CD8-positive, alpha-beta T cell (primary cell): ENCODE measurements at regions of chr21 and their contacts with region 1.

Region 1: DNA sequence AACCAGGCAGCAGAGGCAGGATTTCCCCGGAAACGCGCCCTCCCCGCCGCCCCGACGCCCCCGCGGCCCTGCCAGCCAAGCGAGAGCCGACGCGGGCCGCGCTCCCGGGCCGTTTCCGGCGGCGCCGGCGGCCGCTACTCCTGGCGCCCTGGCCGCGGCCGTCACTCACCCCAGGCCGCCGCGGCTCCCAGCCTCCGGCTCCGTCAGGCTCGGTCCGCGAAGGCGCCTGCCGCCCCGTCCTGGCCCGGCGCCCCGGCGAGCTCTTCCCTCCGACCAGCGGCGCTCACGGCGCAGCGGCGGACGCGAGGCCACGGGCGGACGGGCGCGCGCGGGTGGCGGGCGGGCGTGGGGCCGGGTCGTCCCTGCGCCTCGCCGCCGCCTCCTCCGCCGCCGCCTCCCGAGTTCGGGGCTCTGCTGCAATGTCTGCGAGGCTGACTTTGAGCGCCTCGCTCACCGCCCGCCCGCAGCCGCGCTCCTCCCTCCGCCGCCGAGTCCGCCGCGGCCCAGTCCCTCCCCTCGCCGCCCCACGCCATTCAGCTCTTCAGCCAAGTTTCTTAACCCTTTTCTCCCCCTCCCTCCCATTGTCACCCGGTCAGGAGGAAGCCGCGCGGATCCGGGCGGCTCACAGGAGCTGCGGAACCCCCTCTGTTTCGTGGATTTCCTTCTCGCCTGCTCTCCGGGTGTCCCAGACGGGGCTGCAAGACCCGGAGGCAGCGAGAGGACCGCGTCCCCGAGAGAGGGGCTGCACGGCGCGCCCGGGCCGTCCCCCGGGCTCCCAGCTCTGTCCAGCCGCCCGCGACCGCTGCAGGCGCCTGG is at the start of gene NRIP1:
- DNase-seq: peak; percentile 66 to 93 (median 85)
- ATAC-seq: peak; percentile 78
- H3K4me3 ChIP-seq: peak within 1 kb of the TSS; percentile 75 to 79
- H3K4me3 Mint-ChIP-seq: peak within 1 kb of the TSS; percentile 97
- H3K27ac ChIP-seq: peak within 1 kb of the TSS; percentile 82 to 83
- H3K27ac Mint-ChIP-seq: peak within 1 kb of the TSS; percentile 98
- H3K4me1 ChIP-seq: peaks cover 29% of the 10 kb centered on the region
- H3K4me1 Mint-ChIP-seq: peaks cover 46% of the 10 kb centered on the region
- H3K27me3 ChIP-seq: no peaks in the 10 kb centered on the region
- H3K27me3 Mint-ChIP-seq: no peaks in the 10 kb centered on the region
- CTCF ChIP-seq: no peak
- total RNA-seq, gene NRIP1: 62.4 to 64.3 TPM

Region 2: GRCh38 chr21:14215971-14216641 is 848.7 kb before region 1 on chr21 and contains the start of gene RBM11:
- CTCF ChIA-PET with region 1: no interaction called
- POLR2A ChIA-PET with region 1: no interaction called
- intact Hi-C with region 1: loop called in 1 of 2 experiments (anchors 5 kb)
- DNase-seq: peak; percentile 43 to 87 (median 75)
- ATAC-seq: peak; percentile 97
- H3K4me3 ChIP-seq: peak within 1 kb of the TSS; percentile 71 to 89
- H3K4me3 Mint-ChIP-seq: peak within 1 kb of the TSS; percentile 88
- H3K27ac ChIP-seq: peak within 1 kb of the TSS; percentile 54 to 60
- H3K27ac Mint-ChIP-seq: peak within 1 kb of the TSS; percentile 71
- H3K4me1 ChIP-seq: peaks cover 6% of the 10 kb centered on the region
- H3K4me1 Mint-ChIP-seq: peaks cover 11% of the 10 kb centered on the region
- H3K27me3 ChIP-seq: no peaks in the 10 kb centered on the region
- H3K27me3 Mint-ChIP-seq: peaks cover 7% of the 10 kb centered on the region
- CTCF ChIP-seq: no peak
- total RNA-seq, gene RBM11: 12.6 to 15.7 TPM

Region 3: DNA sequence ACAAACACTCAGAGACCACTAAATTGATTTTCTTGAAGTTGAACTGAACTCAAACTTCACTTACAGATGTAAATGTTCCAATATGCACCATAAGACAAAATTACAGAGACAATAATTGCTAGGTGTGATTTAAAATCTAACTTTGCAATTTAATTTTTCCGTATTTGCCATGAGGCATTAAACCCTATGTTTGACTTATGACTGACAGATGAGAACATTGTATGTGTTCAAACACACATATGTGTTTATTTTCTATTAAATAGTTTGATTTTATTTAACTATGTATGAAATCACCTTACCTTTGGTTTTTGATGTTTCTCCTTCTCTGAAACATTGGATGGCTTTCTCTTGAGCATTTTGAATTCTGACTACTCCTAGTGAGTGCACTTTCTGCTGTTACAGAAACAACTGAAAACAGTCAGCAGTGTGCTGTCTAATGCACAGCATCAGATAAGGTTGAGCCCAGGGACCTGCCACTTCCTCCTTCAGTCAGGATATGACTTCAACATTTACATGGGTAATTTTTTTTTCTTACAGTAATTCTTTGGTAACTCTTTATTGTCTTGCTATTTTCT is 518.8 kb before region 1 on chr21 and contains the start of gene SAMSN1:
- CTCF ChIA-PET with region 1: no interaction called
- POLR2A ChIA-PET with region 1: no interaction called
- intact Hi-C with region 1: loop called (anchors 5 kb)
- DNase-seq: peak; percentile 37 to 88 (median 67)
- ATAC-seq: peak; percentile 90
- H3K4me3 ChIP-seq: peak within 1 kb of the TSS; percentile 53 to 81
- H3K4me3 Mint-ChIP-seq: peak within 1 kb of the TSS; percentile 93
- H3K27ac ChIP-seq: peak within 1 kb of the TSS; percentile 65 to 70
- H3K27ac Mint-ChIP-seq: peak within 1 kb of the TSS; percentile 97
- H3K4me1 ChIP-seq: peaks cover 41% of the 10 kb centered on the region
- H3K4me1 Mint-ChIP-seq: peaks cover 60% of the 10 kb centered on the region
- H3K27me3 ChIP-seq: no peaks in the 10 kb centered on the region
- H3K27me3 Mint-ChIP-seq: no peaks in the 10 kb centered on the region
- CTCF ChIP-seq: no peak
- total RNA-seq, gene SAMSN1: 45.8 to 47.0 TPM

Region 4: DNA sequence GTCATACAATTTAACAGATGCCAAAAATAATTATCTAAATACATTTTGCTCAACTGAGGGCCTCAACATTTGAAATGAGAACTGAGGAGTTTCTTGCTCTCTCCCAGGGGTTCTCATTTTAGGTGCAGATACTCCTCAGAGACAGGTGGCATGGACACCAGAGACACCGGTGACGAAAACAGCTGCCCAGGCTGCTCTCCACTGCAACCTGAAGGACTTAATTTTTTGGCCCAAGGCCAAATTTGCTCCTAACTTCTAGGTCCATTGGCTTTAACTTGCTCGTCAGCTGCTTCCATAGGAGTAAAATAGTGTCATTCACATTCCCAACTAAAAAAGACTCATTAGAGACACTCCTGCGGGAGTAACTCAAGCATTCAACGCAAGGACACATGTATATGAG is 87.0 kb before region 1 on chr21:
- CTCF ChIA-PET with region 1: no interaction called
- POLR2A ChIA-PET with region 1: no interaction called
- intact Hi-C with region 1: no loop called
- DNase-seq: no peak
- ATAC-seq: no peak
- H3K4me3 ChIP-seq: no peak overlapping the region
- H3K4me3 Mint-ChIP-seq: no peak overlapping the region
- H3K27ac ChIP-seq: no peak overlapping the region
- H3K27ac Mint-ChIP-seq: no peak overlapping the region
- H3K4me1 ChIP-seq: no peaks in the 10 kb centered on the region
- H3K4me1 Mint-ChIP-seq: peaks cover 11% of the 10 kb centered on the region
- H3K27me3 ChIP-seq: no peaks in the 10 kb centered on the region
- H3K27me3 Mint-ChIP-seq: no peaks in the 10 kb centered on the region
- CTCF ChIP-seq: no peak

Region 5: GRCh38 chr21:15001857-15002606 is 62.8 kb before region 1 on chr21:
- CTCF ChIA-PET with region 1: no interaction called
- POLR2A ChIA-PET with region 1: interaction called, 26 read pairs
- intact Hi-C with region 1: loop called in 1 of 2 experiments (anchors 1 kb)
- DNase-seq: no peak
- ATAC-seq: no peak
- H3K4me3 ChIP-seq: no peak overlapping the region
- H3K4me3 Mint-ChIP-seq: no peak overlapping the region
- H3K27ac ChIP-seq: no peak overlapping the region
- H3K27ac Mint-ChIP-seq: no peak overlapping the region
- H3K4me1 ChIP-seq: peaks cover 31% of the 10 kb centered on the region
- H3K4me1 Mint-ChIP-seq: peaks cover 58% of the 10 kb centered on the region
- H3K27me3 ChIP-seq: no peaks in the 10 kb centered on the region
- H3K27me3 Mint-ChIP-seq: no peaks in the 10 kb centered on the region
- CTCF ChIP-seq: no peak

Region 6: GRCh38 chr21:15028186-15028585 is 36.6 kb before region 1 on chr21:
- CTCF ChIA-PET with region 1: no interaction called
- POLR2A ChIA-PET with region 1: no interaction called
- intact Hi-C with region 1: no loop called
- DNase-seq: no peak
- ATAC-seq: no peak
- H3K4me3 ChIP-seq: no peak overlapping the region
- H3K4me3 Mint-ChIP-seq: no peak overlapping the region
- H3K27ac ChIP-seq: no peak overlapping the region
- H3K27ac Mint-ChIP-seq: peak overlapping the region; percentile 1
- H3K4me1 ChIP-seq: no peaks in the 10 kb centered on the region
- H3K4me1 Mint-ChIP-seq: peaks cover 41% of the 10 kb centered on the region
- H3K27me3 ChIP-seq: no peaks in the 10 kb centered on the region
- H3K27me3 Mint-ChIP-seq: no peaks in the 10 kb centered on the region
- CTCF ChIP-seq: no peak

Region 7: DNA sequence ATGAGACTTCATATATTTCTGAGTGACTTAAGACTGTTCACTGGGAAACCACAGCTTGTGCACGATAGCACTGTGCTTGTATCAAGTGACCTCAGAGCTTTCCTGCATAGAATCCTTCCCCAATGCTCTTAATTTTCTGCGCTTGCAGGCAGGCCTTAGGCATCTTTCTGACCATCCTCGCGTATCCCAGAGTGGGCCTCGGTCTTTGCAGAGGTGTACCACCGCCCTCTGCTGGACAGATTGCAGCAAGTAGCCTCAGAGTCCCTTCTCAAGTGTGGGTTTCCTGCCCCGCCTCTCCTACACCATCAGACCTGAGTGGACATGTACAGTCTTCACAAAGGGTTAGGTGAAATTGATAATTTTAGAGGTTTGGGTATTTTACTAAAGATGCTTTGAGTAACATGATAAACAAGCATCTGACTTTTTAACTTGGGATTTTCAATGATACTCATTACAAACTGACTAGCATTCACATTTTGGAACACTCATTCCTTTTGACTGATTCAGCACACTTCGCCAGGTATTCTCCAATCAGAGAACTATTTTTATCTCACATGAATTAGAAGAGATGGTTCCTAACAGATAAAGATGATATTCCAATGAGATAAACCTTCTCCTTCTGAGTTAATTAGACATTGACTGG is 418.5 kb after region 1 on chr21:
- CTCF ChIA-PET with region 1: interaction called, 6 read pairs
- POLR2A ChIA-PET with region 1: interaction called, 10 read pairs
- intact Hi-C with region 1: loop called (anchors 1 to 2 kb)
- DNase-seq: peak; percentile 46 to 87 (median 79)
- ATAC-seq: peak; percentile 99
- H3K4me3 ChIP-seq: no peak overlapping the region
- H3K4me3 Mint-ChIP-seq: no peak overlapping the region
- H3K27ac ChIP-seq: no peak overlapping the region
- H3K27ac Mint-ChIP-seq: no peak overlapping the region
- H3K4me1 ChIP-seq: no peaks in the 10 kb centered on the region
- H3K4me1 Mint-ChIP-seq: peaks cover 15% of the 10 kb centered on the region
- H3K27me3 ChIP-seq: no peaks in the 10 kb centered on the region
- H3K27me3 Mint-ChIP-seq: no peaks in the 10 kb centered on the region
- CTCF ChIP-seq: peak; percentile 89

Region 8: GRCh38 chr21:15592271-15592860 is 527.6 kb after region 1 on chr21:
- CTCF ChIA-PET with region 1: no interaction called
- POLR2A ChIA-PET with region 1: no interaction called
- intact Hi-C with region 1: loop called (anchors 2 to 5 kb)
- DNase-seq: peak in 2 of 9 experiments; percentile 54 to 64
- ATAC-seq: no peak
- H3K4me3 ChIP-seq: no peak overlapping the region
- H3K4me3 Mint-ChIP-seq: no peak overlapping the region
- H3K27ac ChIP-seq: no peak overlapping the region
- H3K27ac Mint-ChIP-seq: no peak overlapping the region
- H3K4me1 ChIP-seq: no peaks in the 10 kb centered on the region
- H3K4me1 Mint-ChIP-seq: no peaks in the 10 kb centered on the region
- H3K27me3 ChIP-seq: no peaks in the 10 kb centered on the region
- H3K27me3 Mint-ChIP-seq: peaks cover 5% of the 10 kb centered on the region
- CTCF ChIP-seq: peak; percentile 65